Sigmoid colon (tissue), 7 donors: ENCODE measurements at regions of chr19 and their contacts with region 1.

Region 1: GRCh38 chr19:9768175-9769112 is at the start of gene ZNF846:
- DNase-seq: peak; percentile 97
- H3K4me3 ChIP-seq: peak within 1 kb of the TSS; percentile 52 to 86 (median 75)
- H3K27ac ChIP-seq: peak within 1 kb of the TSS; percentile 92 to 98 (median 94)
- H3K4me1 ChIP-seq: peaks cover 0 to 19% (median 17%) of the 10 kb centered on the region in 4 donors
- H3K27me3 ChIP-seq: no peaks in the 10 kb centered on the region
- CTCF ChIP-seq: no peak
- EP300 ChIP-seq: peak in 1 of 4 donors; percentile 6
- POLR2A ChIP-seq: peak; percentile 54 to 70
- total RNA-seq, gene ZNF846: 15.8 to 48.7 (median 23.7) TPM

Region 2: DNA sequence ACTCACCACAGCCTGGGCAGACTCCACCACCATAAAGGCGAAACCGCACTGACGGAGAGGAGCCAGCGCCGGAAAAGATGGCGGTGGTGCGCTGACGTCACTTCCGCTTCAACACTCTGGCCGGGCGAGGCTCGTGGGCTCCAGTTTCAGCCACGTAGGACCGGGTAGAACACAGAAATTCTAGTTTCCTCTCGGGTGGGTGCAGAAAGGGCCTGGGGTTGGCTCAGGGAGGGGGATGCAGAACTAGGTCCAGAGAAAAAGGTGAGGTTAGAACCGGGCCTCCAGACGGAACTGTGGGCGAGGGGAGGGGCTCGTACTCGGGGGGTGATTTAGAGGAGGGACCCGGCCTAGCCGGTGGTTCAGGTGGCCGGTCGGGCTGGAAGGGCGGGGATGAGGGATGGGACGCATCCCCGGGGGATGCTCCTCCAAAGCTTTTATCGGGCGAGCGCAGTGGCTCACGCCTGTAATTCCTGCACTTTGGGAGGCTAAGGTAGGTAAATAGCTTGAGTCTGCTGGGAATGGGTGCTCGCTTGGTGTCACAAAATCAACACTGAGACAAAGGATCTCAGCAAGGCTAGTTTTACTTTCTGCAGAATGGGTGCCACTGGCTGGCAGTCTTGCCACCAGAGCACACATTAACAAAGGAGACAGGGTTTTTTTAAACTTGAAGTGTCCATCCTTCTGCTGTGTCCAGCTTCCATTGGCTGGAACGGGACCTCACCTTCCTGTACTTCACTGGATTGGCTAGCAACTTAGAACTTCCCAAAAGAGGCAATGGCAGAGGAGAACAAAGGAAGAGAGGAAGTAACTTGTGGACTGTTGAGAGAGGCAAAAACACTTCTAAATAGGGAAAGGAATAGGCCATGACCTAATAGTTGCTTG is 147.0 kb before region 1 on chr19 and contains the start of gene ZNF561:
- intact Hi-C with region 1: loop called (anchors 5 kb)
- DNase-seq: peak; percentile 90
- H3K4me3 ChIP-seq: peak within 1 kb of the TSS; percentile 73 to 88 (median 76)
- H3K27ac ChIP-seq: peak within 1 kb of the TSS; percentile 87 to 91 (median 90)
- H3K4me1 ChIP-seq: peaks cover 0 to 49% (median 35%) of the 10 kb centered on the region in 4 donors
- H3K27me3 ChIP-seq: no peaks in the 10 kb centered on the region
- CTCF ChIP-seq: no peak
- EP300 ChIP-seq: no peak
- POLR2A ChIP-seq: no peak
- total RNA-seq, gene ZNF561: 30.3 to 41.3 (median 31.5) TPM

Region 3: DNA sequence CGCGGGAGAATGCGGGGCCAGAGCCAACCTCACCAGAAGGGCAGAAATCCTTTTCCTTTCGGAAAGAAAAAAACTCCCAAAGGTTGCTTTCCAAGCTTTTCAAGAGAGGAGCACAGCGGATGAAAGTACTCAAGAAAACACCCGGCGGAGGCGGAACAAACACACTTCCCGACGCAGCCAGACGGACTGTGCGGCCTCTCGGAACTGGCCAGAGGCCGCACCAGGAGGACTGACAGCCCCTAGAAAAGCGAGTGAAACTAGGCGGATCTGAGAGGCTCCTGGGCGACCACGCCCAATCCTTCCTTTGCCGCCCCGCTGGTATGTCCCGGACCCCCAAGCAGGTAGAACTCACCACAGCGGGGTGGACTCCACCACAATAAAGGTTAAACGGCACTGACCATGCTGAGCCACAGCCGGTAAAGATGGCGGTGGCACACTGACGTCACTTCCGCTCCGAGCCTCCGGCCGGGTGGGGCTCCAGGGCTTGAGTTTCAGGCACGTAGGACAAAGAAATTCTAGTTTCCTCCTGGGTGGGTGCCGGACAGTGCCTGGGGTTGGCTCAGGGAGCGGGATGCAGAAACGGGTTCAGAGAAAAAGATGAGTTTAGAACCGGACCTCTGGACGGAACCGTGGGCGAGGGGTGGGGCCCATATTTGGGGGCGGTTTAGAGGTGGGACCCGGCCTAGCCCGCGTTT is 93.6 kb before region 1 on chr19 and contains the start of gene ZNF562:
- intact Hi-C with region 1: loop called (anchors 1 kb)
- DNase-seq: peak; percentile 92
- H3K4me3 ChIP-seq: peak within 1 kb of the TSS; percentile 63 to 68 (median 66)
- H3K27ac ChIP-seq: peak within 1 kb of the TSS; percentile 91 to 95 (median 93)
- H3K4me1 ChIP-seq: peaks cover 0 to 16% (median 6%) of the 10 kb centered on the region in 4 donors
- H3K27me3 ChIP-seq: no peaks in the 10 kb centered on the region
- CTCF ChIP-seq: no peak
- EP300 ChIP-seq: no peak
- POLR2A ChIP-seq: peak; percentile 36 to 56
- total RNA-seq, gene ZNF562: 21.3 to 45.4 (median 32.4) TPM

Region 4: DNA sequence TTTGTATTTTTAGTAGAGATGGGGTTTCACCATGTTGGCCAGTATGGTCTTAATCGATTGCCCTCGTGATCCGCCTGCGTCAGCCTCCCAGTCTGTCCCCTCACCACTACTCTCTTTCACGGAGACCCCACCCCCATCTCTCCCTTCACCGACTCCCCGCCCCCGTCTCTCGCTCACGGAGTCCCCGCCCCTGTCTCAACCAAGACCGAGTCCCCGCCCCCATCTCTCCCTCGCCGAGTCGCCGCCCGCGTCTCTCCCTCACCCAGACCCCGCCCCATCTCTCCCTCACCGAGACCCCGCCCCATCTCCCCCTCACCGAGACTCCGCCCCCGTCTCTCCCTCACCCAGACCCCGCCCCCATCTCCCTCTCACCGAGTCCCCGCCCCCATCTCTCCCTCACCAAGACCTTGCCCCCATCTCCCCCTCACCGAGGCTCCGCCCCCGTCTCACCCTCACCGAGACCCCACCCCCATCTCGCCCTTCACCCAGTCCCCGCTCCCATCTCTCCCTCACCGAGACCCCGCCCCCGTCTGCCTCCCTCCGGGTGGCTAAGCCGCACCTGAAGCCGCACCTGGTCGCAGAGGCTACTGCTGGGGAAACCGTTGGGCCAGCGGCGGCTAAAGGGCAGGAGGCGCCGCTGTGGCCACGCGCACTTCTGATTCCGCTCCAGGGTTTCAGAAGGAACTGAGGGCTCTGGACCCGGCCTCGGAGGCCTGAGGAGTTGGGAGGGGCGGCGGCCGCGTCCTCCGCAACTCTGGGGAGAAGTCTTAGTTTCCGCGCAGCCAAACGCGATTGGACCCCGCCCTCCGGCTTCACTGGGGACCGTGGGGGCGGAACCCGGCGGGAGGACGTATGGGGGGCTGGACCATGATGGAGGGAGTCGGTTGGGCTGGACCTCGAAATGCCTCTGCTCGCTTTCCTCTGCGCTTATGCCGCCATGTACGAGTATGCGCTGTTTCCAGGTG is 17.2 kb after region 1 on chr19:
- intact Hi-C with region 1: loop called (anchors 1 kb)
- DNase-seq: peak; percentile 99
- H3K4me3 ChIP-seq: peak overlapping the region; percentile 64 to 92 (median 72)
- H3K27ac ChIP-seq: peak overlapping the region; percentile 94 to 99 (median 99)
- H3K4me1 ChIP-seq: peaks cover 0 to 32% (median 27%) of the 10 kb centered on the region in 4 donors
- H3K27me3 ChIP-seq: no peaks in the 10 kb centered on the region
- CTCF ChIP-seq: no peak
- EP300 ChIP-seq: no peak
- POLR2A ChIP-seq: peak; percentile 88 to 92

Region 5: DNA sequence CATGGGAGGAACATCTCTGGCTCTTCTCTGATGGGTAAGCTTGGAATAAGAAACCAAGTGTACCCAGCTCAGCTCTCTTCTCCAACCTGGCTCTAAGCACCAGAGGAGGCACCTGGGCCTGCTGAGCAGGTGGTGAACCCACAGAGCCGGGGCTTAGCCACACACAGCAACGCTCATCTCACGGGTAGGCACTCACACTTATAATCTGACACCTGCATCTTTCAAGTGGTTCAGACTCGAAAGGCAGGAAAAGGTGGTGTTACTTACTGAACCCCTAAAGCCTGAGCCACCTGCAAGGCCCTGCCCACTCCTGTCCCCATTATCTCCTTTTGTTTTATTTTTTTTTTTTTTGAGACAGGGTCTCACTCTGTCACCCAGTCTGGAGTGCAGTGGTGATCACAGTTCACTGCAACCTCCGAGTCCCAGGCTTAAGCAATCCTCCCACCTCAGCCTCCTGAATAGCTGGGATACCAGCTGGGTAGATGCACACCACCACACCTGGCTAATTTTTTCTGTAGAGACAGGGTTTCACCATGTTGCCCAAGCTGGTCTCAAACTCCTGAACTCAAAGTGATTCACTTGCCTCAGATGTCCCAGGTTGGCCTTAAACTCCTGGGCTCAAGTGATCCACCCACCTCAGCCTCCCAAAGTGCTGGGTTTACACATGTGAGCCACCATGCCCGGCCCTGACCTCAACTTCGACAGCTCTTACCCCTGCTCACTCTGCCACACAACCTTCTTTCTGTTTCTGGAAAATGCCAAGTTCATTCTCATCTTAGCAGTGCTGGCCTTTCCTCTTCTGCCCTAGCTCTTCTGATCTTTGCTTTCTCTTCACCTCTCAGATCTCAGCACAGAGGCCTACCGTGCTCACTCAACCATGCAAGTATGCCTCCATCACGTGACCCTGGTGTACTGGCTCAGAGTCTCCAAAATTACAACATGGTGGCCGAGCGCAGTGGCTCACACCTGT is 40.7 kb after region 1 on chr19:
- intact Hi-C with region 1: no loop called
- DNase-seq: no peak
- H3K4me3 ChIP-seq: no peak overlapping the region
- H3K27ac ChIP-seq: no peak overlapping the region
- H3K4me1 ChIP-seq: no peaks in the 10 kb centered on the region
- H3K27me3 ChIP-seq: no peaks in the 10 kb centered on the region
- CTCF ChIP-seq: no peak
- EP300 ChIP-seq: no peak
- POLR2A ChIP-seq: no peak